Activated naive CD4-positive, alpha-beta T cell treated with anti-CD3 and anti-CD28 coated beads, Interleukin-2, amount 10 ng/mL, durations not matched to agents 7 days and 5 days (primary cell): ENCODE measurements at regions of chr17 and their contacts with region 1.

Region 1: GRCh38 chr17:28357061-28357900 is at the start of gene POLDIP2:
- DNase-seq: peak; percentile 97
- H3K4me3 Mint-ChIP-seq: peak within 1 kb of the TSS; percentile 93
- H3K27ac Mint-ChIP-seq: peak within 1 kb of the TSS; percentile 91
- H3K4me1 Mint-ChIP-seq: peaks cover 37% of the 10 kb centered on the region
- H3K27me3 Mint-ChIP-seq: no peaks in the 10 kb centered on the region

Region 2: DNA sequence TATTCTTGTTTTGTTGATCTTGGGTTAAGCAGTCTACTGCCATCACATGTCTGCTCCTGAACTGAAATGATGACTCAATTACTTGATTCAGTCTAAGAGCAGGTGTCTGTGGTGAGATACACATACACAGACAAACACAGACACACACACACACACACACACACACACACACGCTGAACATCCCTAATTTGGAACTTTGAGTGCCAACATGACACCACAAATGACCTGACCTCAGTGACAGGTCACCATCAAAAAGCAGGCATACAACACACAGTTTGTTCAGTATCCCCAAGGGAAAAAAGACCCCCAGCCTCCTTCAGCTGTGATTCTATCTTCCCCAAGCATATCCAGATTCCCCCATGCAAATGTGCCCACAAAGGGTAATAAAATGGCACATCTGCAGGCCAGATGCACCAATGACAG is 168.4 kb before region 1 on chr17:
- CTCF ChIA-PET with region 1: no interaction called
- DNase-seq: no peak
- H3K4me3 Mint-ChIP-seq: no peak overlapping the region
- H3K27ac Mint-ChIP-seq: no peak overlapping the region
- H3K4me1 Mint-ChIP-seq: peaks cover 9% of the 10 kb centered on the region
- H3K27me3 Mint-ChIP-seq: no peaks in the 10 kb centered on the region

Region 3: DNA sequence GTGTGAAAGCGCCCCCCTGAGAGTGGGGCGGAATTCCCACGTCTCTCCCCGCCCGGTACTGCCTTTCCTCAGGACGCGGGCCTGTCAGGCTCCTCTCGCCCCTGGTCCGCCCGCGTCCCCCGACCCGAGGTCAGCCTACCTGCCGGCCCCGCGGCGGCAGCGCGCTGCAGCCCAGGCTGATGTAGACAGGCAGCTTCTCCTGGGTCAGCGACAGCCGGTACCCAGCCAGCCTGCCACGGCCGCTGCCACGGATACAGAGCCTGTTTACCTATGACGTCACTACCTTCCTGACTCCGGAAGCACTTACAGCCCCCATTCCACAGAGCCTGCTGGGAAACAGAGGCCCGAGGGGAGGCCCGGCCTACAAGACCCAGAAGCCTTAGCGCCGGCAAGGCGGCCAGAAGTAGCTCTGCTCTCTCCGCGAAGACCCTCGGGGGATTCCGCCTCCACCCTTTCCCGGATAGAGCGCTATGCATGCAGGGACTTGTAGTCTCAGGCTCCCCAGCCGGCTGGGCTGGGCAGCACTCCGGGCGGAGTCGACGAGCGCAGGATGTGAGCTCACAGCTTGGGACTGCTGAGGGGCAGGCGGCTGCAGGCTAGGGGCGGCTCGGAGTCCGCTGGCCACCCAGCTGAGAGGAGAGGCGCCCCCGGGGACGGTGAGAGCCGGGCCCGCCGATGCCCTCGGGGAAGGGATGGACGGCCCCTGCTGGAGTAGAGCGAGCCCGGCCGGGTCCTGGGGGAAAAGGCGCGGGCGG is 21.9 kb before region 1 on chr17 and contains the starts of genes IFT20 and TNFAIP1:
- CTCF ChIA-PET with region 1: interaction called, 10 read pairs
- DNase-seq: peak; percentile 99
- H3K4me3 Mint-ChIP-seq: peak within 1 kb of the TSS; percentile 99
- H3K27ac Mint-ChIP-seq: peak within 1 kb of the TSS; percentile 98
- H3K4me1 Mint-ChIP-seq: peaks cover 53% of the 10 kb centered on the region
- H3K27me3 Mint-ChIP-seq: no peaks in the 10 kb centered on the region

Region 4: DNA sequence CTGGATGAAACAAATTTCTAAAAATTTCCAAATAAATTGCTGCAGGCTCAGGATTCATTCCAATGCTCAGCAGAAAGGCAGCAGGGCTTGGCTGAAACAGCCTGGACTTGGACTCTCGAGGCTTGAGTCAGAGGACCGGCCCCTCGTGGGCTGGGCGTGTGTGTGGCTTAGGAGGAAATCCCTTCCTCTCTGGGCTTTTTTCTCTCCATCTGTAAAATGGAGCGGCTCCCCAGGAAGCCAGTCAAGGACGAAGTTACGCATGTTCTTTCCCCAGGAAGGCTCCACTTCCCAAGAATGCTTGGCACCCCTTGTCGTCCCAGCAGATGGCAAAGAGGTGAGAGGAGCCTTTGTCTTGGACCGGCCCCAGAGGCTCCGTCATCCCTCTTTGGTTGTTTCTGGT is 35.2 kb after region 1 on chr17:
- CTCF ChIA-PET with region 1: no interaction called
- DNase-seq: no peak
- H3K4me3 Mint-ChIP-seq: no peak overlapping the region
- H3K27ac Mint-ChIP-seq: no peak overlapping the region
- H3K4me1 Mint-ChIP-seq: no peaks in the 10 kb centered on the region
- H3K27me3 Mint-ChIP-seq: no peaks in the 10 kb centered on the region